GM12878 (cell line): ENCODE measurements at regions of chr11 and their contacts with region 1.

Region 1: DNA sequence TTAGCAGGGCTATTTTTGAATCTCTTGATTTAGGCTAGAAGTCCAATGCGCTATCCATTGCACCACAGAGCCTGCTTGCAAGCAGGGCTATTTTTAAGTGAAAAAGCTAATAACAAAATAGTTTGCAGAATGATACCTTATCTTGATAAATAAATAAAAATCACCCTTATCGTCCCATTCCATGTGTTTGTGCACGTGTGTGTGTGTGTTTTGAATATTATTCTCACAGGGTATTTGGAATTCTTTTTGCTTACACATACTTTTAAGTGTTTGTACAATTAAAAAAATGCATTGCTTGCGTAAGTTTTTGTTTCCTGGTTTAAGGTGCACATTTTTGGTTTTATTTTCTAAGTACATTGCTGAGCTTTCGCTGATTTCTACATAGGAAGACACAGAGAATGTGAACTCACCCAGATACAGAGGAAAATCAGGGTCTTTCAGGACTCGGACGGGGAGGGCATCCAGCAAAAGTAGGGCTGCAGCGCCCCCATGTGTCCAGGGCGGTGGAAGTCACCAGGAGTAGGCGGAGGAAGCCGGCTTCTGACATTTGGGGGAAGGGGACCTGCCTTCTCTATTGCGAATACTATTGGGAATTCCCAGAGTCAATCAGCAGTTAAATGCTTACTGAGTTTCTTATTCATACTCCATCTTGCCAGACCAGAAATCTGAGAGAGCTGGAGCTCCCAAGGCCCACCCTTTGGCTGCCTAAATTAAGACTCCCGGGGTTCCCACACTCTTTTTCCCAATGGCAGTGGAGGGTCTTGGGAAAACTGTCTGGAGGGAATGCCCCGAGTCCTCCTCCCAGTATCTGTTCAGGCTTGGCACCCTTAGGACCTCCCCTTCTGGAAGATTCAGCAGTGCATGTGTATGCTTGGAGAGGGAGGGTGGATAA is 27.2 kb downstream of the SLC1A2 start:
- DNase-seq: peak; percentile 45
- ATAC-seq: peak; percentile 87
- H3K4me3 ChIP-seq: peak overlapping the region; percentile 21; the same call in 1 of the 2 replicates
- H3K27ac ChIP-seq: no peak overlapping the region
- H3K4me1 ChIP-seq: peaks cover 25% of the 10 kb centered on the region
- H3K27me3 ChIP-seq: no peaks in the 10 kb centered on the region; a peak in 1 of 4 replicates
- CTCF ChIP-seq: peak; percentile 84 to 93 (median 93); a peak in 5 of 6 replicates
- EP300 ChIP-seq: no peak
- POLR2A ChIP-seq: no peak
- RAD21 ChIP-seq: peak; percentile 99

Region 2: DNA sequence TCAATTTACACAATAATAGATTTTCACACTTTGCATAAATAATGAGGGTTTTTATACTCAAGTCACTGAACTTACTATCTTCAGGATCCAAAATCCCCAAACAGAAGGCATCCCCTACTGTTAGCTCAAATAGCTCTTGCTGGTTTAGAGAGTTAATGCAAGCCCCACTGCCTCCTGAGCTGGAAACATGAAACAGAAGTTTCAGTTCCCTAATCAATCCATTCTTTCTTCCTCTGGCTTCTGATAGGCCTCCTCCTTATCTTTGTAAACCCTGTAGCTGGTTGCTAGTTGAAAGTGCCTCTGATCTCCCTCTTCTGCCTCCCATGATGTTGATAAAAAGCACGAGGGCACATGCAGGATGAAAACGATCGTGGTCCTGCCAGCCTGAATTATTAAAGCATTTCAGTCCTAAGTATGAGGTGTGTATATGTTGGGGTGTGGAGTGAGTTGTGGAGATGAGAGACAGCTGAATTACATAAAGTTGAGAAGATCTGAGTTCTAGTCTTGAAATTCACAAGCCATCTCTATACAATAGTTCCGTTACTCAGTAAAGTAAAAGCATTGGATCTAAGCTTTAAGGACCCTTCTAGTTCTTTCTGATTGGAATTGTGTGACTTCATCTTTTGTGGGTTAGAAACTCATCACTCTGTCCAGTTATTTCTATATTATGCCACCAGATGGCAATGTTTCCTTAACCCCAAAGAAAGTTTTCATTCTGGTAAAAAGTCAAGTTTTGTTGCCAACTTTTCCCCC is 806.3 kb before region 1 on chr11:
- CTCF ChIA-PET with region 1: interaction called, 50 read pairs
- POLR2A ChIA-PET with region 1: no interaction called
- RAD21 ChIA-PET with region 1: interaction called, 20 read pairs
- SMC1A ChIA-PET with region 1: interaction called, 17 read pairs
- in situ Hi-C with region 1: no loop called
- intact Hi-C with region 1: loop called (anchors 5 kb)
- DNase-seq: peak; percentile 20
- ATAC-seq: peak; percentile 91
- H3K4me3 ChIP-seq: no peak overlapping the region
- H3K27ac ChIP-seq: no peak overlapping the region
- H3K4me1 ChIP-seq: no peaks in the 10 kb centered on the region
- H3K27me3 ChIP-seq: no peaks in the 10 kb centered on the region; a peak in 2 of 4 replicates
- CTCF ChIP-seq: peak; percentile 54 to 64 (median 59); a peak in 5 of 6 replicates
- EP300 ChIP-seq: no peak
- POLR2A ChIP-seq: no peak
- RAD21 ChIP-seq: peak; percentile 91

Region 3: GRCh38 chr11:34806875-34807274 is 585.3 kb before region 1 on chr11:
- CTCF ChIA-PET with region 1: no interaction called
- POLR2A ChIA-PET with region 1: no interaction called
- RAD21 ChIA-PET with region 1: no interaction called
- SMC1A ChIA-PET with region 1: no interaction called
- in situ Hi-C with region 1: no loop called
- intact Hi-C with region 1: no loop called
- DNase-seq: no peak
- ATAC-seq: no peak
- H3K4me3 ChIP-seq: no peak overlapping the region
- H3K27ac ChIP-seq: no peak overlapping the region
- H3K4me1 ChIP-seq: no peaks in the 10 kb centered on the region
- H3K27me3 ChIP-seq: peaks cover 0 to 5% of the 10 kb centered on the region in 2 experiments; a peak in 1 of 4 replicates
- CTCF ChIP-seq: no peak
- EP300 ChIP-seq: no peak
- POLR2A ChIP-seq: no peak
- RAD21 ChIP-seq: no peak

Region 4: DNA sequence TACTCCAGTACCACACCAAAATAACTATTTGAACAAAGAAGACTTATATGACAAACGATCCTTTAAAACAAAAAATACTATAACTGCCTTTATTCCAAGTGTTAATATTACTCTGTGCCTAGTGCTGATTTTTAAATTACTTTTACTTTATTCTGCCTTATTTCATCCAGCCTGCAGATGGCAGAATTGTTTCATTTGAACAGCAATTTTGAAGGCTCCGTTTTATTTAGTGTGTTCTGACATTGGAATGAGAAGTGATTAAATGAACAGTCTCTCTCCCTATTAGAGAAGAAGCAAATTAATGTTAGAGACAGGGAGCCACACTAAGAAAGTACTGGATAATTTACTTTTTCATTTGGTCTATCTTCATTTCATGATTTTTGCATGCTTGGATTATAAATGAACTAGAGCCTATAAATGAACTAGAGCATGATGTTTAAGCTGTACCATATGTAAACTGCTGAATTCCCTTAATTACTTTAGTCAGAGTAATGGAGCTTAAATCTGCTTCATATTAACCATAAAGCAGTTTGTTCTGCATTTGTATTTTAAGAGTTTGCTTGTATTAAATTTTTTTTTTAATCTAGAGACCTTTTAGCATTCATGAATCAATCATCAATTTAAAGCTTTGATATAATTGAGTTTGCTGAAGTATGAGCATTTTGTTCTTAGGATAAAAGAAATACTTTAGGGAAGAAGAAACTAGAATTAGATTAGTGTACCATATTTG is 465.9 kb before region 1 on chr11:
- CTCF ChIA-PET with region 1: interaction called, 172 read pairs
- POLR2A ChIA-PET with region 1: interaction called, 3 read pairs
- RAD21 ChIA-PET with region 1: interaction called, 100 read pairs
- SMC1A ChIA-PET with region 1: interaction called, 110 read pairs
- in situ Hi-C with region 1: loop called (anchors 5 kb)
- intact Hi-C with region 1: loop called (anchors 1 kb)
- DNase-seq: no peak
- ATAC-seq: peak; percentile 76
- H3K4me3 ChIP-seq: no peak overlapping the region
- H3K27ac ChIP-seq: no peak overlapping the region
- H3K4me1 ChIP-seq: 0 out of 2 replicates have a peak, but pooled peaks cover 2% of the 10 kb centered on the region
- H3K27me3 ChIP-seq: no peaks in the 10 kb centered on the region
- CTCF ChIP-seq: peak; percentile 52 to 70 (median 59); a peak in 5 of 6 replicates
- EP300 ChIP-seq: no peak
- POLR2A ChIP-seq: no peak
- RAD21 ChIP-seq: peak; percentile 97

Region 5: GRCh38 chr11:35006389-35007128 is 385.6 kb before region 1 on chr11:
- CTCF ChIA-PET with region 1: interaction called, 122 read pairs
- POLR2A ChIA-PET with region 1: no interaction called
- RAD21 ChIA-PET with region 1: interaction called, 5 read pairs
- SMC1A ChIA-PET with region 1: interaction called, 5 read pairs
- in situ Hi-C with region 1: no loop called
- intact Hi-C with region 1: no loop called
- DNase-seq: peak; percentile 95
- ATAC-seq: peak; percentile 96
- H3K4me3 ChIP-seq: no peak overlapping the region
- H3K27ac ChIP-seq: peak overlapping the region; percentile 51
- H3K4me1 ChIP-seq: peaks cover 18% of the 10 kb centered on the region
- H3K27me3 ChIP-seq: no peaks in the 10 kb centered on the region
- CTCF ChIP-seq: no peak
- EP300 ChIP-seq: peak; percentile 83 to 94; a peak in 3 of 4 replicates
- POLR2A ChIP-seq: no peak
- RAD21 ChIP-seq: no peak; the same call in 1 of the 2 replicates

Region 6: DNA sequence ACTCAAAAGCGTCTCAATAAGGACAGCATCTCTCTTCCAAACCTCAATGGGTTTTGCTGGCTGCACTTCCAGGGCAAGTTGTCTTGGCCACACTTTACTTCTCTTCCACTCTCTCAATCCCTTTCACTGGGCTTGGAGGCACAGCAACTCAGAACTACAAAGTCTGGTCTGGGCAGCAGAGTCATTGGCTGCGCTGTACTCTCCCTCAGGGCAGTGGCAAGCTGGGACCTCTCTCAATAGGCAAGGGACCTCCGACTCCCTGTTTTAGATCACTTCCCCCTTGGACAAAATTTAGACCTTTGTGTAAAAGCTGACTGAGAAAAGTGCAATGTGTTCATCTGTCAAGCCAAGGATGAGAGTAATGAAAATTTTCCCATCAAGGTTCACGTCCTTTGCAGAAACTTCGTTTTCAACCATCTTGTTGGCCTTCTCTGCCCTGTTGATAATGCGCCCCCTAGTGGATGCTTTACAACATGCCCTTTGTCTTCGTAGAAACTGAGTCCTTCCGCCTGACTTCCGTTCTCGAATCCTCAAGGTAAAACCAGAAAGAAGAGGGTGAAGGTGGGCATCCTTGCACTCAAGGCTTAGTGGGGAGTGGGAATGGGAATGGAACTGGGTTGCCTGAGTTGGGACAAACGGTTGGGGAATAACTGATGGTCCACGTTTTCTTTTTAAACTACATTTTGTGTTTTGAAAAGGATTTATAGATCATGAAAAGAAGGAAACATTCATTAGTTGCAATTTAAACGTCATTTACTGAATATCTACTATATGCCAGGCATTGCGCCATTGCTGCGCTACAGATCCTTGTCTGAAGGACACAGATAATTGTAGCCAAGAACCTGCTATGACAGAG is 154.1 kb before region 1 on chr11:
- CTCF ChIA-PET with region 1: interaction called, 60 read pairs
- POLR2A ChIA-PET with region 1: no interaction called
- RAD21 ChIA-PET with region 1: interaction called, 8 read pairs
- SMC1A ChIA-PET with region 1: interaction called, 21 read pairs
- in situ Hi-C with region 1: no loop called
- intact Hi-C with region 1: loop called (anchors 1 kb)
- DNase-seq: peak; percentile 35
- ATAC-seq: peak; percentile 70
- H3K4me3 ChIP-seq: no peak overlapping the region
- H3K27ac ChIP-seq: no peak overlapping the region
- H3K4me1 ChIP-seq: peaks cover 19% of the 10 kb centered on the region
- H3K27me3 ChIP-seq: no peaks in the 10 kb centered on the region
- CTCF ChIP-seq: peak; percentile 73 to 82 (median 82)
- EP300 ChIP-seq: no peak
- POLR2A ChIP-seq: no peak
- RAD21 ChIP-seq: peak; percentile 84

Region 7: GRCh38 chr11:35305670-35306382 is 86.3 kb before region 1 on chr11:
- CTCF ChIA-PET with region 1: interaction called, 30 read pairs
- POLR2A ChIA-PET with region 1: no interaction called
- RAD21 ChIA-PET with region 1: interaction called, 34 read pairs
- SMC1A ChIA-PET with region 1: interaction called, 21 read pairs
- in situ Hi-C with region 1: no loop called
- intact Hi-C with region 1: loop called (anchors 2 kb)
- DNase-seq: no peak
- ATAC-seq: peak; percentile 90
- H3K4me3 ChIP-seq: no peak overlapping the region
- H3K27ac ChIP-seq: no peak overlapping the region
- H3K4me1 ChIP-seq: peaks cover 19% of the 10 kb centered on the region
- H3K27me3 ChIP-seq: no peaks in the 10 kb centered on the region
- CTCF ChIP-seq: peak; percentile 68 to 76 (median 71)
- EP300 ChIP-seq: 0 out of 4 replicates have a peak, but pooled peaks of 1 of the 2 experiments have one; percentile 27
- POLR2A ChIP-seq: no peak
- RAD21 ChIP-seq: peak; percentile 93

Region 8: GRCh38 chr11:35337136-35337918 is 54.8 kb before region 1 on chr11:
- CTCF ChIA-PET with region 1: interaction called, 17 read pairs
- POLR2A ChIA-PET with region 1: no interaction called
- RAD21 ChIA-PET with region 1: interaction called, 20 read pairs
- SMC1A ChIA-PET with region 1: interaction called, 12 read pairs
- in situ Hi-C with region 1: no loop called
- intact Hi-C with region 1: no loop called
- DNase-seq: no peak
- ATAC-seq: peak; percentile 31
- H3K4me3 ChIP-seq: no peak overlapping the region
- H3K27ac ChIP-seq: no peak overlapping the region
- H3K4me1 ChIP-seq: peaks cover 8% of the 10 kb centered on the region; the same call in 1 of the 2 replicates
- H3K27me3 ChIP-seq: no peaks in the 10 kb centered on the region
- CTCF ChIP-seq: no peak
- EP300 ChIP-seq: no peak
- POLR2A ChIP-seq: no peak
- RAD21 ChIP-seq: no peak

Region 9: GRCh38 chr11:35419184-35419829 is 27.1 kb after region 1 on chr11 and contains the start of gene SLC1A2:
- CTCF ChIA-PET with region 1: no interaction called
- POLR2A ChIA-PET with region 1: no interaction called
- RAD21 ChIA-PET with region 1: no interaction called
- SMC1A ChIA-PET with region 1: no interaction called
- in situ Hi-C with region 1: no loop called
- intact Hi-C with region 1: no loop called
- DNase-seq: no peak
- ATAC-seq: peak; percentile 14
- H3K4me3 ChIP-seq: no peak within 1 kb of the TSS
- H3K27ac ChIP-seq: no peak within 1 kb of the TSS
- H3K4me1 ChIP-seq: no peaks in the 10 kb centered on the region
- H3K27me3 ChIP-seq: peaks cover 24 to 26% of the 10 kb centered on the region in 2 experiments
- CTCF ChIP-seq: no peak
- EP300 ChIP-seq: no peak
- POLR2A ChIP-seq: no peak
- RAD21 ChIP-seq: no peak
- polyA plus RNA-seq, gene SLC1A2: 0.24 TPM in 1 of 2 experiments, not detected in the other

Region 10: GRCh38 chr11:36354221-36355003 is 962.2 kb after region 1 on chr11:
- CTCF ChIA-PET with region 1: no interaction called
- POLR2A ChIA-PET with region 1: no interaction called
- RAD21 ChIA-PET with region 1: no interaction called
- SMC1A ChIA-PET with region 1: no interaction called
- in situ Hi-C with region 1: no loop called
- intact Hi-C with region 1: no loop called
- DNase-seq: peak; percentile 42
- ATAC-seq: peak; percentile 78
- H3K4me3 ChIP-seq: peak overlapping the region; percentile 18; the same call in 1 of the 2 replicates
- H3K27ac ChIP-seq: 0 out of 2 replicates have a peak overlapping the region, but pooled peaks have one; percentile 1
- H3K4me1 ChIP-seq: peaks cover 44% of the 10 kb centered on the region
- H3K27me3 ChIP-seq: no peaks in the 10 kb centered on the region
- CTCF ChIP-seq: no peak
- EP300 ChIP-seq: peak; percentile 27 to 58; a peak in 3 of 4 replicates
- POLR2A ChIP-seq: no peak
- RAD21 ChIP-seq: no peak